ENCODE measurements at regions of chr17 and their contacts with region 1.

Region 1: GRCh38 chr17:58112970-58113631 is 29.9 kb downstream of the DYNLL2 start:
- DNase-seq: peak; percentile 69 to 76 (median 69)
- ATAC-seq: peak; percentile 93 to 99 (median 96)
- H3K4me3 ChIP-seq: no peak overlapping the region
- H3K27ac ChIP-seq: no peak overlapping the region
- H3K4me1 ChIP-seq: no peaks in the 10 kb centered on the region
- H3K27me3 ChIP-seq: no peaks in the 10 kb centered on the region
- CTCF ChIP-seq: peak; percentile 91 to 97 (median 94)
- POLR2A ChIP-seq: no peak

Region 2: GRCh38 chr17:57130761-57131461 is 982.2 kb before region 1 on chr17:
- intact Hi-C with region 1: loop called in 1 of 2 experiments (anchors 10 kb)
- DNase-seq: peak; percentile 75 to 79 (median 78)
- ATAC-seq: peak; percentile 89 to 98 (median 95)
- H3K4me3 ChIP-seq: no peak overlapping the region
- H3K27ac ChIP-seq: no peak overlapping the region
- H3K4me1 ChIP-seq: peaks cover 0 to 6% (median 0%) of the 10 kb centered on the region in 4 donors
- H3K27me3 ChIP-seq: no peaks in the 10 kb centered on the region
- CTCF ChIP-seq: peak; percentile 60 to 89 (median 87)
- POLR2A ChIP-seq: no peak

Region 3: DNA sequence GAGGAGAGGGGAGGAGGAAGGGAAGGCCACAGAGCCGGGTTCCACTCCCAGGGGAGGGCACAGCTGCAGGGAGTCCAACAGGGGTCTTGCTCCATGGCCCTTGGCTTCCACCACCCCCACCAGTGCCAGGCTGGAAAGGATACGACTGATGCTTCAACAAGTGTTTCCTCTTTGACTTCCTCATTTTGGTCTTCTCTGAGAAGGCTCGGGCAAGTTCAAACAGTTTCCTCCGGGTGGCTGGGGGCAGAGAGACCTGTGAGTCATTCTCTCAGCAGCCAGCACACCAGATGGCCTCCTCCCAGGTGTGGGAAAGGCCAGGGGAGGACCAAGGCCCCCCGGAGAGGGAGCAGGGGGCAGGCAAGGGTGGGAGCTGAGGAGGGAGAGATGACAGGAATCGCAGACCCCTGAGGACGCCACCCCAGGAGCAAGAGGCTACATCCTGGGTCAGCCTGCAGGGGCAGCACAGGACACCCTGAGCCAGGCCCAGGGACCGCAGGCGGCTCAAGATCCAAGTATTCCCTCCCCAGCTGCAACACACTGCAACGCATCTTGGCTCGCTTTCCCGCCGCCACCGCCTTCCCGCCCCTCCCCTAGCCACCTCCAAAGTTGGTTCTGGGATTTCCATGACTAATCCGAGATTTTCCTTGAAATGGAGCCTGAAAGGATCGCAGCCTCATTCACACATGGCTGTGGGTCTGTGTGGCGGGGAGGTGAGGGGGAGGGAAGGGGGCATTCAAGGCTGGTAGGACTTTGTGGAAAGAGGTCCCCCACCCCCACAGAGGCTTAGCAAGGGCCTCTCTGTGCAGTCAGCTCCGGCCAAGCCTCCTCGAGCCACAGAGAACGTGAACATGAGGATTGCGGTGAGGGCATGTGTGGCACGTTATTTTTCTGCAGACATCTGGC is 244.8 kb before region 1 on chr17:
- intact Hi-C with region 1: loop called (anchors 10 kb)
- DNase-seq: no peak
- ATAC-seq: peak in 3 of 4 donors; percentile 40 to 70 (median 51)
- H3K4me3 ChIP-seq: no peak overlapping the region
- H3K27ac ChIP-seq: no peak overlapping the region
- H3K4me1 ChIP-seq: no peaks in the 10 kb centered on the region
- H3K27me3 ChIP-seq: no peaks in the 10 kb centered on the region
- CTCF ChIP-seq: no peak
- POLR2A ChIP-seq: no peak

Region 4: DNA sequence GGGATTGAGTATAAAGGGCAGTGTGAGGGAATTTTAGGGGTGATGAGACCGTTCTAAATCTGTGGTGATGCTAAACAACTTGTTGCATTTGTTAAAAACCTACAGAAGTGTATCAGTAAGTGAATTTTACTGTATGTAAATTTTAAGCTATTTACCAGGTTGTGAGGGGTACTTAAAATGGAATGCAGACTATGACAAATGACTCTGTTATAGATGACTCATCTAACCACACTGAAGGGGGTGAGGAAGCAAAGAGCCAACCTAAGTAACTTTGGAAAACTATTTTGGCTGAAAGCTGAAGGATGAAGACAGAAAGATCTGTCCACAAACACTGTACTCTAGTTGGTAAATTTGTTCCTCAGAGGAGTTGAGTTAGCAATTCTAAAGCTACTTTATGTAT is 111.2 kb after region 1 on chr17:
- intact Hi-C with region 1: no loop called
- DNase-seq: no peak
- ATAC-seq: no peak
- H3K4me3 ChIP-seq: no peak overlapping the region
- H3K27ac ChIP-seq: no peak overlapping the region
- H3K4me1 ChIP-seq: no peaks in the 10 kb centered on the region
- H3K27me3 ChIP-seq: no peaks in the 10 kb centered on the region
- CTCF ChIP-seq: no peak
- POLR2A ChIP-seq: no peak